Ovary (tissue), 10 donors: ENCODE measurements at regions of chr11 and their contacts with region 1.

Region 1: DNA sequence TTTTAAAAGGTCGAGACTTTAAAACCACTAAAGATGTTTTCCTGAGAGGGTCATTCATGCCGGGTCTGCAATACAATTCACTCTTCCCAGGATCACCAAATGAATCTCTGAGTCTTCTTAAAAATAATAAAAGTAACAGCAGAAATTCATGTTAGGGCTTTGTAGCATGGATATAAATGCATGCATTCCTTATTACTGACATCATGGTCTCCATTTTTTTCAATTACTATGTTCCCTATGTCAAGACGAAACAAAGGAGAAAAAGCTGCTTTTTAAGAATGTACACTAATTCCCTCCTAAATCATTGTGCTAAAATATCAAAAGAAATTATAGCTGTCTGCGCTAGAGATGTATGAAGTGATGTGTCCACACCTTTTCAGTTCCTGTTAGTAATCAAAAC is 789.9 kb upstream of the LRRC4C start:
- DNase-seq: no peak
- H3K4me3 ChIP-seq: no peak overlapping the region
- H3K27ac ChIP-seq: no peak overlapping the region
- H3K4me1 ChIP-seq: no peaks in the 10 kb centered on the region
- H3K27me3 ChIP-seq: no peaks in the 10 kb centered on the region
- CTCF ChIP-seq: no peak
- EP300 ChIP-seq: no peak
- POLR2A ChIP-seq: no peak

Region 2: DNA sequence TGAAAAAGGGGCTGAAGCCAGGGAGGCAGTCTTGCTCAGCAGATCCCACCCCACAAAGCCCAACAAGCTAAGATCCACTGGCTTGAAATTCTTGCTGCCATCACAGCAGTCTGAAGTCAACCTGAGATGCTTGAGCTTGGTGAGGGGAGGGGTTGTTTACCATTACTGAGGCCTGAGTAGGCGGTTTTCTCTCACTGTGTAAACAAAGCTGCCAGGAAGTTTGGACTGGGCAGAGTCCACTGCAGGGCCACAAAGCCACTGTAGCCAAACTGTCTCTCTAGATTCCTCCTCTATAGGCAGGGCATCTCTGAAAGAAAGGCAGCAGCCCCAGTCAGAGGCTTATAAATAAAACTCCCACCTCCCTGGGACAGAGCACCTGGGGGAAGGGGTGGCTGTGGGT is 43.9 kb before region 1 on chr11:
- intact Hi-C with region 1: no loop called
- DNase-seq: no peak
- H3K4me3 ChIP-seq: no peak overlapping the region
- H3K27ac ChIP-seq: no peak overlapping the region
- H3K4me1 ChIP-seq: no peaks in the 10 kb centered on the region
- H3K27me3 ChIP-seq: no peaks in the 10 kb centered on the region
- CTCF ChIP-seq: no peak
- EP300 ChIP-seq: no peak
- POLR2A ChIP-seq: no peak

Region 3: DNA sequence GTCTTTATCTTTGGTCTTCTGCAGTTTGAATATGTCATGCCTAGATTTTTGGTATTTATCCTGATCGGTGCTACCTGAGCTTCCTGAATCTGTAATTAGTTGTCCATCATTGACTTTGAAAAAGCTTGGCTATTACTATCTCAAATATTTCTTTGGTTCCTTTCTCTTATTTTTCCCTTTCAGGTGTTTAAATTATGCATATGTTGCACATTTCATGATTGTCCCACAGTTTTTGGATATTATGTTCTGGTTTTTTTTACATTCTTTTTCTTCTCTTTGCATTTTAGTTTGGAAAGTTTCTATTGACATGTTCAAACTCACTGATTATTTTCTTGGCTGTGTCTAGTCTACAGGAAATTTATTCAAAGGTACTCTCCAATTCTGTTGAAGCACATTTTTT is 50.4 kb after region 1 on chr11:
- intact Hi-C with region 1: loop called in 1 of 4 experiments (anchors 10 kb)
- DNase-seq: no peak
- H3K4me3 ChIP-seq: no peak overlapping the region
- H3K27ac ChIP-seq: no peak overlapping the region
- H3K4me1 ChIP-seq: no peaks in the 10 kb centered on the region
- H3K27me3 ChIP-seq: no peaks in the 10 kb centered on the region
- CTCF ChIP-seq: no peak
- EP300 ChIP-seq: no peak
- POLR2A ChIP-seq: no peak